CD4-positive, alpha-beta T cell (primary cell): ENCODE measurements at regions of chr2 and their contacts with region 1.

Region 1: GRCh38 chr2:101697124-101698013 is at the start of gene MAP4K4:
- DNase-seq: peak; percentile 63 to 90 (median 81)
- ATAC-seq: peak; percentile 64
- H3K4me3 ChIP-seq: peak within 1 kb of the TSS; percentile 84
- H3K4me3 Mint-ChIP-seq: peak within 1 kb of the TSS; percentile 98
- H3K27ac ChIP-seq: peak within 1 kb of the TSS; percentile 68 to 86
- H3K27ac Mint-ChIP-seq: peak within 1 kb of the TSS; percentile 93
- H3K4me1 ChIP-seq: peaks cover 31% of the 10 kb centered on the region
- H3K4me1 Mint-ChIP-seq: peaks cover 25% of the 10 kb centered on the region
- H3K27me3 ChIP-seq: no peaks in the 10 kb centered on the region
- H3K27me3 Mint-ChIP-seq: no peaks in the 10 kb centered on the region
- CTCF ChIP-seq: no peak
- total RNA-seq, gene MAP4K4: 92.8 to 94.0 TPM

Region 2: GRCh38 chr2:101252408-101253012 is 444.9 kb before region 1 on chr2 and contains the start of gene CNOT11:
- CTCF ChIA-PET with region 1: no interaction called
- POLR2A ChIA-PET with region 1: no interaction called
- intact Hi-C with region 1: loop called in 1 of 2 experiments (anchors 5 kb)
- DNase-seq: peak; percentile 98 to 100 (median 99)
- ATAC-seq: peak; percentile 77
- H3K4me3 ChIP-seq: peak within 1 kb of the TSS; percentile 90
- H3K4me3 Mint-ChIP-seq: peak within 1 kb of the TSS; percentile 97
- H3K27ac ChIP-seq: peak within 1 kb of the TSS; percentile 92 to 98
- H3K27ac Mint-ChIP-seq: peak within 1 kb of the TSS; percentile 93
- H3K4me1 ChIP-seq: peaks cover 50% of the 10 kb centered on the region
- H3K4me1 Mint-ChIP-seq: peaks cover 55% of the 10 kb centered on the region
- H3K27me3 ChIP-seq: no peaks in the 10 kb centered on the region
- H3K27me3 Mint-ChIP-seq: no peaks in the 10 kb centered on the region
- CTCF ChIP-seq: peak; percentile 2
- total RNA-seq, gene CNOT11: 39.4 to 46.8 TPM

Region 3: DNA sequence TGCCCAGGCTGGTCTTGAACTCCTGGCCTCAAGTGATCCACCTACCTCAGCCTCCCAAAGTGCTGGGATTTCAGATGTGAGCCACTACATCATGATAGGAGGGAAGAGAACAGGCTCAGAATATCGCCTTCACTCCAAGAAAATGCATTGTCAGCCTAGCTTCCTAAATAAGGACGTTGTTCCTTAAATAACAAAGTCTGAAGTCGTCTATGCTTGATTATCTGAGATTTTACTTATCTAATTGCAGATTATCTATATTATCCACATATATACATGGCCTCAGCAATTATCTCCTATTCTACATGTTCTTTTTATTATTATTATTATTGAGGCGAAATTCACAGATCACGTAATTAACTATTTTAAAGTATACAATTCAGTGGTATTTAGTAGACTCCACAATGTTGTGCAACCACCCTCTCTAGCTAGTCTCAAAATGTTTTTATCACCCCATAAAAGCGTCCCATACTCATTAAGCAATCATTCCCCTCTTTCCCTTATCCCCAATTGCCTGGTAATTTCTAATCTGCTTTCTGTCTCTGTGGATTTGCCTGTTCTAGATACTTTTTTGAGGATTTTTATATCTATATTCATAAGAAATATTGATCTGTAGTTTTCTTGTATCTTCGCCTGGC is 127.4 kb before region 1 on chr2:
- CTCF ChIA-PET with region 1: no interaction called
- POLR2A ChIA-PET with region 1: interaction called, 6 read pairs
- intact Hi-C with region 1: loop called in 1 of 2 experiments (anchors 5 kb)
- DNase-seq: no peak
- ATAC-seq: no peak
- H3K4me3 ChIP-seq: no peak overlapping the region
- H3K4me3 Mint-ChIP-seq: peak overlapping the region; percentile 78
- H3K27ac ChIP-seq: peak overlapping the region; percentile 13 to 18
- H3K27ac Mint-ChIP-seq: peak overlapping the region; percentile 74
- H3K4me1 ChIP-seq: peaks cover 14% of the 10 kb centered on the region
- H3K4me1 Mint-ChIP-seq: peaks cover 70% of the 10 kb centered on the region
- H3K27me3 ChIP-seq: no peaks in the 10 kb centered on the region
- H3K27me3 Mint-ChIP-seq: no peaks in the 10 kb centered on the region
- CTCF ChIP-seq: no peak

Region 4: GRCh38 chr2:101717071-101717845 is 19.9 kb after region 1 on chr2:
- CTCF ChIA-PET with region 1: interaction called, 5 read pairs
- POLR2A ChIA-PET with region 1: interaction called, 81 read pairs
- intact Hi-C with region 1: loop called in 1 of 2 experiments (anchors 2 kb)
- DNase-seq: peak in 12 of 14 experiments; percentile 37 to 85 (median 54)
- ATAC-seq: peak; percentile 76
- H3K4me3 ChIP-seq: peak overlapping the region; percentile 8
- H3K4me3 Mint-ChIP-seq: peak overlapping the region; percentile 76
- H3K27ac ChIP-seq: peak overlapping the region; percentile 53 to 76
- H3K27ac Mint-ChIP-seq: peak overlapping the region; percentile 95
- H3K4me1 ChIP-seq: peaks cover 77% of the 10 kb centered on the region
- H3K4me1 Mint-ChIP-seq: peaks cover 84% of the 10 kb centered on the region
- H3K27me3 ChIP-seq: no peaks in the 10 kb centered on the region
- H3K27me3 Mint-ChIP-seq: no peaks in the 10 kb centered on the region
- CTCF ChIP-seq: no peak

Region 5: DNA sequence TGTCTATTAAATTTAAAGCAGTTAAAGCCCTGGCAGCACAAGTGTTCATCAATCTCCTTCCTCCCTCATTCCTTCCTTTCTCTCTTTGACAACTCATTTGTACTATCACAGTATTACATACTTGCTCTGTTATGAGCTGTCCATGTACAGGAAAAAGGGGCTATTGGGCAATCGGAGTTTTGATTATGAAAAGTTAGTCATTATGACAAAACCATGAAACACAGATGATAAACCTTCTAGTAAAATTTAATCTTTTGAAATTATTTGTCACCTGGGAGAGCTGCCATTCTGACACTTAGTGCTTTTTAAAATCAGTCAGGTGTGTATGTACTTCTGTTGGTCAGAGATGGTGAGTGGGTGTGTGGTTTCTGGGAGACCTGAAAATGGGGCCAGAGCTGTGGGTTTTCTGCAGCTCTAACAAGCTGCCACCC is 39.5 kb after region 1 on chr2:
- CTCF ChIA-PET with region 1: no interaction called
- POLR2A ChIA-PET with region 1: interaction called, 6 read pairs
- intact Hi-C with region 1: loop called (anchors 5 kb)
- DNase-seq: peak in 2 of 14 experiments; percentile 49 to 57
- ATAC-seq: peak; percentile 19
- H3K4me3 ChIP-seq: no peak overlapping the region
- H3K4me3 Mint-ChIP-seq: peak overlapping the region; percentile 0
- H3K27ac ChIP-seq: no peak overlapping the region
- H3K27ac Mint-ChIP-seq: peak overlapping the region; percentile 39
- H3K4me1 ChIP-seq: peaks cover 49% of the 10 kb centered on the region
- H3K4me1 Mint-ChIP-seq: peaks cover 94% of the 10 kb centered on the region
- H3K27me3 ChIP-seq: no peaks in the 10 kb centered on the region
- H3K27me3 Mint-ChIP-seq: no peaks in the 10 kb centered on the region
- CTCF ChIP-seq: no peak

Region 6: GRCh38 chr2:101823347-101823791 is 126.0 kb after region 1 on chr2:
- CTCF ChIA-PET with region 1: interaction called, 5 read pairs
- POLR2A ChIA-PET with region 1: interaction called, 11 read pairs
- intact Hi-C with region 1: loop called (anchors 2 kb)
- DNase-seq: peak; percentile 48 to 85 (median 65)
- ATAC-seq: peak; percentile 89
- H3K4me3 ChIP-seq: no peak overlapping the region
- H3K4me3 Mint-ChIP-seq: peak overlapping the region; percentile 12
- H3K27ac ChIP-seq: peak overlapping the region in 1 of 2 donors; percentile 38
- H3K27ac Mint-ChIP-seq: peak overlapping the region; percentile 81
- H3K4me1 ChIP-seq: peaks cover 37% of the 10 kb centered on the region
- H3K4me1 Mint-ChIP-seq: peaks cover 76% of the 10 kb centered on the region
- H3K27me3 ChIP-seq: no peaks in the 10 kb centered on the region
- H3K27me3 Mint-ChIP-seq: no peaks in the 10 kb centered on the region
- CTCF ChIP-seq: peak; percentile 88